ENCODE measurements at regions of chr15 and their contacts with region 1.

Region 1: DNA sequence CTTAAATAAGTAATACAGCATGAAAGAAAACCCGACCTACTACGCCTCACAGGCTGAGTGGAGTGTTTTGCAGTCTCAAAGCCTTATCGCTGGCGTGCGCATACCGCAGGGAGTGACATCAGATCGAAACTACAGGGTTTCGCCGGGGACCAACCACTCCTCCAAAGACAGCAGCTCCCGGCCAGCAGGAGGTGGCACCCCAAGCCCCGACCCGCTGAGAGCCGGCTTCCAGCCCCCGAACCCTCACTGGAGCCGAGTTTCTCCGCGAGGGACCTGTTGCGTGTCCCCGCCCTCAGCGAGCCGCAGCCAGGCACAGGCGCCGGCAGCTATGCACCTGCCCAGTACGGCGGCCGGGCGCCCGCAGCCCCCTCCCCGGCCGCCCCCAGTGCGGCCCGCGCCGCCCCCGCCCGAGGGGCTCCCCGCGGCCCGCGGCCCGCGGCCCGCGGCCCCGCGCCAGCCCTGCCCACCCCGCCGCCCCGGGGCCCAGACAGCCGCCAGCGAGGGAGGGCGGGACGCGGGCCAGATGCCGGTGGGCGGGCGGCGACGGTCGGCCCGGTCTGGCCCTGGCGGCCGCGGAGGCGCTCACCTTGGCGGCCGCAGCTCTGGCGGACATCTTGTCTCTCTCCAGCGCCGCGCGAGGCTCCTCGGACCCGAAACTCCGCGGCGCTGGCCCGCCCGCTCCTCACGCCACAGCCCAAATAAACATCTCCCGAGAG is 694 bp downstream of the TJP1 start:
- DNase-seq: peak; percentile 65 to 76
- ATAC-seq: peak; percentile 47 to 64 (median 55)
- H3K4me3 ChIP-seq: peak overlapping the region; percentile 90
- H3K27ac ChIP-seq: peak overlapping the region; percentile 99
- H3K4me1 ChIP-seq: peaks cover 21% of the 10 kb centered on the region
- H3K27me3 ChIP-seq: no peaks in the 10 kb centered on the region
- CTCF ChIP-seq: peak; percentile 23

Region 2: DNA sequence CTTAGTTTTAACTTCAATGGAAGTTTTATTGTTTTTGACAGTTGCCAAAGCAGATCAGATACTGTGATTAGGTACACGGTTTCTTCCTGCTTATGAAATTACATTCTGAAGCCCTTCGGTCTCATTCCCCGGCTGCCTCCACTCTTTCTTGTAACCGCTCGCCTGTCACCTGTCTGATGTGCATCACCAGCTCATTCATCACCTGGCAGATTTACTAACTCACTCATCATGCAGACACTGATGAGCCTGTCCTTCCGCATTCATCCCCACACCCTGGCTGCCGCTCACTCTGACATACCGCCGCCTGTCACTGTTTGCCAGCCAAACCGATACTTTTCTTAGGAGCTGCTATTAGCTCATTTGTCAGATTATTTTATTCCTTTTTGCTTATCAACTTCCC is 469.2 kb before region 1 on chr15:
- intact Hi-C with region 1: no loop called
- DNase-seq: no peak
- ATAC-seq: no peak
- H3K4me3 ChIP-seq: no peak overlapping the region
- H3K27ac ChIP-seq: no peak overlapping the region
- H3K4me1 ChIP-seq: no peaks in the 10 kb centered on the region
- H3K27me3 ChIP-seq: peaks cover 0 to 4% (median 0%) of the 10 kb centered on the region in 3 donors
- CTCF ChIP-seq: no peak

Region 3: GRCh38 chr15:29747837-29748417 is 73.6 kb before region 1 on chr15:
- intact Hi-C with region 1: loop called (anchors 5 kb)
- DNase-seq: no peak
- ATAC-seq: no peak
- H3K4me3 ChIP-seq: no peak overlapping the region
- H3K27ac ChIP-seq: no peak overlapping the region
- H3K4me1 ChIP-seq: no peaks in the 10 kb centered on the region
- H3K27me3 ChIP-seq: no peaks in the 10 kb centered on the region
- CTCF ChIP-seq: peak; percentile 45

Region 4: DNA sequence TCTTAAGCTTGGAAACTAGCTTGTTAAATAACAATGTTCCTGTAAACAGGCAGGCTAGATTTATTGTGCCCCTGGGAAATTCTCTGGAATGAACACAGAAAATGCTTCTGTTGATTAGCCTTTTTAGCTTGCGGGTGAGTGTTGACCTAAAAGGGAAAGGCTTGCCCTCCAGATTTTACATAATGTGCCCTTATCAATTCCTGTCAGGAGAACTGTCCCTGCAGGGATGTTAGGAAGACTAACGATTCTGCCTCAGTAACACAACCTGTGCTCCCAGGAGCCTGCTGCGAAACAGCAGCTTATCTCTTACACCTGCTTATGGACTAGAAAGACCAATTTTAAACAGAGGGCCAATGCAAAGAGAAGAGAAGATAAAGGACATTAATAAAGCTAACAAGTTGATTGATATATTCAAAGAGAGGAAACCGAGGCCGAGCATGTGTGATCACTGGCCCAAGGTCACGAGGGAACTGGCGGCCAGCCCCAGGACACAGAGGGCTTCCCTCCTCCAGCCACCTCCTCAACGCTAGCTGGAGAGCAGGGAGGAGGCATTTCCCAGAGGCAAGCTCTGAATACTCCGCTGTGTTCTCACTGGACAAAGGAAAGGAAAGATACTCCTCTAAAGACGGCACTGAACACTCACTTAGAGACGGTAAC is 49.0 kb after region 1 on chr15:
- intact Hi-C with region 1: loop called in 1 of 2 experiments (anchors 5 kb)
- DNase-seq: peak in 1 of 2 donors; percentile 57
- ATAC-seq: peak in 1 of 4 donors; percentile 36
- H3K4me3 ChIP-seq: peak overlapping the region; percentile 12
- H3K27ac ChIP-seq: peak overlapping the region; percentile 71
- H3K4me1 ChIP-seq: no peaks in the 10 kb centered on the region
- H3K27me3 ChIP-seq: no peaks in the 10 kb centered on the region
- CTCF ChIP-seq: no peak

Region 5: DNA sequence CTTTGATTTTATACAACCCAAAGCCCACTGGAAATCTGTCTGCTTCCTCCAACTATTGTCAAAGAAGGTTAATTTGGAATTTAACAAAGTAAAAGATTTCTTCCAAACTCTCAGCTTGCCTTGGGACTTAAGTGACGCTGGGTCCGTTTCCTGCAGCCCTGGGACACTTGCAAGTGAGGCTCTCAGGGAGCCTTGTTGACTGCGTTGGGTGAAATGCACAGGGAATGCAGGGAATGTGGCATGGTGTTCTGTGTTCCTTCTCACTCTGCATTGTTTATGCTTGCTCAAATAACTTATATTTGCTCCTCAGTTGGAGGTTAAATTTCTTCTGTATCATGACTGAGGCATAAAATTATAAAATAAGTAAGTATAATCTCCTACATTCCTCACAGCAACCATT is 61.6 kb after region 1 on chr15:
- intact Hi-C with region 1: no loop called
- DNase-seq: no peak
- ATAC-seq: no peak
- H3K4me3 ChIP-seq: no peak overlapping the region
- H3K27ac ChIP-seq: no peak overlapping the region
- H3K4me1 ChIP-seq: no peaks in the 10 kb centered on the region
- H3K27me3 ChIP-seq: no peaks in the 10 kb centered on the region
- CTCF ChIP-seq: no peak

Region 6: GRCh38 chr15:29913528-29914135 is 92.1 kb after region 1 on chr15:
- intact Hi-C with region 1: loop called in 1 of 2 experiments (anchors 5 kb)
- DNase-seq: no peak
- ATAC-seq: no peak
- H3K4me3 ChIP-seq: no peak overlapping the region
- H3K27ac ChIP-seq: no peak overlapping the region
- H3K4me1 ChIP-seq: no peaks in the 10 kb centered on the region
- H3K27me3 ChIP-seq: no peaks in the 10 kb centered on the region
- CTCF ChIP-seq: no peak

Region 7: DNA sequence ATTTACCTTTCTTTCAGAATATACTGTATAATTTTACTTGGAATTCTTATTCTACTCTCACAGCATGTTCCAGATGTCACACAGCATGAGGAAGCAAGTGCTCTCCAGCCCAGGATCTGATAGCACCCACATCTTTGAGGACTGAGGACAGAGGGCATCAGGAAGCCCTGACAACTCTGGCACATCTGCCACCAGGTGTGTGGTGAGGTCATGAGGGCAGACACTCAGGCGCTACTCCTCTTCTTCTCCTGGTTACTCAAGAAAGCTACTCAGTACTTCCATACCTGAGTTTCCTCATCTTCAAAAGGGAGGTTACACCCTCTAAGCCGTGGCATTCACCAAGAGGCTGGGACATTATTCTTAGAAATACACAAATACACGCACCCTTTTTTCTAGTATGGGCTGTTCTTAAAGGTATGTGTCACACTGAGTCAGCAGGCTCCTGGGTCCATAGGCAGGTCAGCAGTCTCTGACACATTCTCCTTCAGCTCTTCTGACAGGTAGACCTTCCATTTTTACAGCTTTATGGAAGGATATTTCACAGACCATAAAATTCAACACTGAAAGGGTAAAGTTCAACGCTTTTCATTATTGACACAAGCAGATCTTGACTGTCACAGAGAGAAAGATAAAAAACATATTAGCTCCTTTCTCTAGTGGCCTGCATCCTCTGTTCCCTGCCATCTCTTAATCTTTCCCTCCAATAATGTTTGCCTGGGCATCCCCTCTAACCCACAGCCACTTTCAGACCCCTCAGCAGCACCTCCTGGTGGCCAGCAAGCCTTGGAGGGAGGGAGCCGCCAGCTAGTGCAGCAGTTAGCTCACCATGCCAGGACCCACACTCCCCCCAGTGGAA is 103.9 kb after region 1 on chr15:
- intact Hi-C with region 1: loop called in 1 of 2 experiments (anchors 10 kb)
- DNase-seq: peak; percentile 47 to 64
- ATAC-seq: peak in 3 of 4 donors; percentile 58 to 61 (median 58)
- H3K4me3 ChIP-seq: no peak overlapping the region
- H3K27ac ChIP-seq: no peak overlapping the region
- H3K4me1 ChIP-seq: no peaks in the 10 kb centered on the region
- H3K27me3 ChIP-seq: peaks cover 0 to 2% (median 0%) of the 10 kb centered on the region in 3 donors
- CTCF ChIP-seq: peak; percentile 58

Measured in psoas muscle (tissue), 8 donors.